Calu3 (cell line): ENCODE measurements at regions of chr6 and their contacts with region 1.

Region 1: GRCh38 chr6:82114748-82115147 is 132.8 kb downstream of the IBTK start:
- DNase-seq: no peak
- H3K4me3 Mint-ChIP-seq: no peak overlapping the region
- H3K27ac Mint-ChIP-seq: no peak overlapping the region
- H3K4me1 Mint-ChIP-seq: no peaks in the 10 kb centered on the region
- H3K27me3 Mint-ChIP-seq: no peaks in the 10 kb centered on the region
- CTCF ChIP-seq: no peak

Region 2: DNA sequence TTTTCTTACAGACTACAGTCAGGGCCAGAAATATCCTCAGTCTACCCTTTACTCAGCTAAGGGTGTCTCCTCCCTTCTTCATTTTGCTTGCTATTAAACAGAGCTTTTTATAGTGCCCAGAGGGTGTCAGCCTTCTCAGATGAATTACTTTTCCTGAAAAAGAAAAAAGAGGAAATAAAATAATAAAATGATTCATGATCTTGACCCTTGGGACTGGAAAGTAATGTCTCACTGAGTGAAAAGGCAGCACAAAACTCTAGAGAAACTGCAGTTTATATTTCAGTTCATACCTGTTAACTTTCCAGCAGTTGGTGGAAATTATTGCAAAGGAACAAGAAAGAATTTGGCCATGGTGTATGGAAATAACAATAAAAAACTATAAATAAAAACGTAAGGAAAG is 37.8 kb before region 1 on chr6:
- CTCF ChIA-PET with region 1: no interaction called
- intact Hi-C with region 1: loop called (anchors 2 kb)
- DNase-seq: no peak
- H3K4me3 Mint-ChIP-seq: no peak overlapping the region
- H3K27ac Mint-ChIP-seq: no peak overlapping the region
- H3K4me1 Mint-ChIP-seq: no peaks in the 10 kb centered on the region
- H3K27me3 Mint-ChIP-seq: no peaks in the 10 kb centered on the region
- CTCF ChIP-seq: no peak

Region 3: GRCh38 chr6:82166493-82166892 is 51.7 kb after region 1 on chr6:
- CTCF ChIA-PET with region 1: no interaction called
- intact Hi-C with region 1: no loop called
- DNase-seq: no peak
- H3K4me3 Mint-ChIP-seq: no peak overlapping the region
- H3K27ac Mint-ChIP-seq: no peak overlapping the region
- H3K4me1 Mint-ChIP-seq: no peaks in the 10 kb centered on the region
- H3K27me3 Mint-ChIP-seq: no peaks in the 10 kb centered on the region
- CTCF ChIP-seq: no peak

Region 4: DNA sequence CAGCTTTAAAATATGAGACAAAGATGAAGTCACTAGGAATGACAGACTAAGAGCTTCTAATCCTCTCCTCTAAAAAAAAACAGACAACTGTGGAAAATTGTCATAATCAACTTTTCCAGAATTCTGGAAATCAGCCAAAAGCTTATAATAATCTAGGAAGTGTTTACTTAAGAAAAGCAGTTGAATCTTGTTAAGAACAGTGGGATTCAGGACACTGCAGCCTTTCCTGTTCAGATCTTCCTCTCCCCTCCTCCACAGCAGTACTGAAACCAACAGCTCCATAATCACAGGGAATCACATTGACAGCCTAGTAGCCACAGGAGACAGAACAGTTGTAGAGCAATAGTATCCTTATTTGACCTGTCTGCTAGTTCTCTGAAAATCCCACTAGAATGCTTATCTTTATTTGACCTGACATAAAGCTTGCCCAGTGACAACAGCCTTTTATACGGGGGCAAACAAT is 91.2 kb after region 1 on chr6:
- CTCF ChIA-PET with region 1: no interaction called
- intact Hi-C with region 1: no loop called
- DNase-seq: no peak
- H3K4me3 Mint-ChIP-seq: no peak overlapping the region
- H3K27ac Mint-ChIP-seq: no peak overlapping the region
- H3K4me1 Mint-ChIP-seq: no peaks in the 10 kb centered on the region
- H3K27me3 Mint-ChIP-seq: no peaks in the 10 kb centered on the region
- CTCF ChIP-seq: no peak